Right cardiac atrium (tissue), 5 donors: ENCODE measurements at regions of chr4 and their contacts with region 1.

Region 1: GRCh38 chr4:145609481-145610427 is 9.4 kb upstream of the MMAA start:
- DNase-seq: peak; percentile 25 to 71 (median 43)
- ATAC-seq: peak in 1 of 2 donors; percentile 50
- H3K4me3 ChIP-seq: no peak overlapping the region
- H3K27ac ChIP-seq: no peak overlapping the region
- H3K4me1 ChIP-seq: no peaks in the 10 kb centered on the region
- H3K27me3 ChIP-seq: no peaks in the 10 kb centered on the region

Region 2: DNA sequence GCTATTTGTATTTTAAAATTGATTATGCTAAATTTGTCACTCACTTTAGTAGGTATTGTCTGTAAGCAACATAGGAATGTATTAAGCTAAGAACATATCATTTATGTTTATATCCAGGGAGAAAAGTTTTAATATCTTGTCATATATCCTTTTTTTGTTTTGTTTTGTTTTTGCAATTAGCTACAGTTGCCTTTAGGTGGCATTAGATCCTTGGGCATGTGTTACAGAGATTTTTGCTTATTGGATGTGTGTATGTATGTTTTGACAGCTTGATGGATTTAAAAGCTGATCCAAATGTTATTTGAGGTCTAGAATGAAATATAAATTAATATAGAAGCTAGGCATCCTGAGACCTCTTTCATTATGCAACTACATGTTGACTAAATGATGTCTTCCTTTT is 393.2 kb before region 1 on chr4:
- intact Hi-C with region 1: loop called in 1 of 4 experiments (anchors 10 kb)
- DNase-seq: no peak
- ATAC-seq: no peak
- H3K4me3 ChIP-seq: no peak overlapping the region
- H3K27ac ChIP-seq: no peak overlapping the region
- H3K4me1 ChIP-seq: no peaks in the 10 kb centered on the region
- H3K27me3 ChIP-seq: no peaks in the 10 kb centered on the region

Region 3: DNA sequence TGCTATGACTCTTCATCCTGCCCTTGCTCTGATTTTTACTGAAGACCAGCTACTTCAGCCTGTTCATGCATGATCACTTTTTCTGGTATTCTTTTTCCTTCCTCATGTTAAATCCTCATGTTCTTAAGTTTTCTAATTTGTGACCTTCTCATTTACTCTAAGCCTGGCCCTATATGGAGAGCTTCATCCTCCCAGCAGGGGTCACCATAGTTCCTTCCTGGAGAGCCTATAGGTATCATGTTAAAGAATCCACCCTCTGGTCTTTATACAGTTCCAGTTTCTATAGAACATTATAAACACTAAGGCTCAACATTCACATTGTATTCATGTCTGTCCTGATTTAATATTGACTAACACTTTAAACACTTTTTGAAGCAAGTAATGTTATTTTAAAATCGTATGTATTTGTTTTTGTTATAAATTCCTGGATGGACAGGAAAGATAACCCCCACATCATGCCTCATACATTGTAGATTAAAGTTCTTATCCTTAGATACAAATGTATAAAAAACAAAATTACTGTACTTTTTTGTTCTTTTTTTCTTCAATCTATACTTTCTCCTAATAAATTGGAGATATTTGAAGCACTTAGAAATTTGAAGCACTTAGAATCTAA is 375.6 kb before region 1 on chr4:
- intact Hi-C with region 1: loop called in 3 of 4 experiments (anchors 5 to 10 kb)
- DNase-seq: no peak
- ATAC-seq: peak; percentile 67 to 70
- H3K4me3 ChIP-seq: no peak overlapping the region
- H3K27ac ChIP-seq: no peak overlapping the region
- H3K4me1 ChIP-seq: no peaks in the 10 kb centered on the region
- H3K27me3 ChIP-seq: no peaks in the 10 kb centered on the region

Region 4: DNA sequence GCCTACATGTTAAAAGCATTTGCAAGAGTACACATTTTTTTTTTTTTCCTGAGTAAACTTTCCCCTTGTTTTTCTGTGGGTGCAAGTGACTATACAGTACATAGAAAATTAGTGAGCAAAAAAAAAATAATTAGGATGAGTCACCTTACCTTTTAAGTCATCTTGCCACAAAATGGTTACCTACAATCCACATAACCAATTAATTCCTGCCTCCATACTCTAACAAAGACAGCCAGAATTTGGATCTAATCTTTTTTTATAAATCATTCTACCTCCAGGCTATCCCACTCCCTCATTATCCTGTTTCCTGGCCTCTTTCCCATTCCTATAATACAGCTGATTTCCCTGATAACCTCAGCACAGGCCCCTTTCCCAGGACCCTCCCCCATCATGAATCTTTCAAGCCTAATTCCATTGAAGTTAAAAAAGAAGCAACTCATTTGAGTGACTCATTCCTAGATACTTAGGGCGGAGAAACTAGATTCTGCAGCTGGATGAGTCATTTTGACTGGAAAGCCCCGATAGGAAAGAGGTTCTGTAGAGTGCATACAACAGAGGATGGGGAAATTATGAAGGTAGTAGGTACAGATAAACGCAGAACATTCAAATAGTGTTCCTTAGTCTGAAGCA is 198.4 kb after region 1 on chr4:
- intact Hi-C with region 1: no loop called
- DNase-seq: no peak
- ATAC-seq: peak; percentile 65 to 87
- H3K4me3 ChIP-seq: no peak overlapping the region
- H3K27ac ChIP-seq: no peak overlapping the region
- H3K4me1 ChIP-seq: peaks cover 3% of the 10 kb centered on the region
- H3K27me3 ChIP-seq: no peaks in the 10 kb centered on the region

Region 5: DNA sequence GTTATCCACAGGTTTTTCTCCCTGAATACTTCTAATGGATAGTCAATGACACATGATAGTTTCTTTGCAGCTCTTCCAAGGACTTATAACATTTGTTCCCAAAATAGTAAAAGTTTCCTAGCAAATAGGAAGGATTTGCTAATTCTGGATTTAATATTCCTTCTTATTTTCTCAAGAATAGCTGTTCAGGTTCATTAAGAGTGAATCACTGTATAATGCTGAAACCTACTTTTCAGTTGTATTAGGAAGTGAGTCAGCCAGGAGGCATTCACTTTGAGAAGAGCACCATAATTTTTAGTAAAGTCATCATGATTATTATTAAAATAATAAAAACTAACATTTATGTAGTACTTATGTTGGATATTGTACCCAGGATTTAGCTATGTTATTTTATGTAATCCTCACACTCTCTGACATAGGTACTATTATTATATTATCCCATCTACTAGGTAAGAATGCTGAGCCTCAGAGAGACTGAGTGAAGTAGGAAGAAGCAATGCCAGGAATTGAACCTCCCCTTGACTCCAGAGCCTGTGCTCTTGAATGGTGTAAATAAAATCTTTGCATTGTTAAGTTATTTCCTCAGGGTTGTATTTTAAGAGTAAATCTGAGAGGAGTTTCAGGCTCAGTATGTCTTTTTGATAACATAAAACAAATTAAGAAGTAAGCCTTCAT is 719.4 kb after region 1 on chr4:
- intact Hi-C with region 1: no loop called
- DNase-seq: no peak
- ATAC-seq: no peak
- H3K4me3 ChIP-seq: no peak overlapping the region
- H3K27ac ChIP-seq: no peak overlapping the region
- H3K4me1 ChIP-seq: no peaks in the 10 kb centered on the region
- H3K27me3 ChIP-seq: no peaks in the 10 kb centered on the region